ENCODE measurements at regions of chr7 and their contacts with region 1.

Region 1: DNA sequence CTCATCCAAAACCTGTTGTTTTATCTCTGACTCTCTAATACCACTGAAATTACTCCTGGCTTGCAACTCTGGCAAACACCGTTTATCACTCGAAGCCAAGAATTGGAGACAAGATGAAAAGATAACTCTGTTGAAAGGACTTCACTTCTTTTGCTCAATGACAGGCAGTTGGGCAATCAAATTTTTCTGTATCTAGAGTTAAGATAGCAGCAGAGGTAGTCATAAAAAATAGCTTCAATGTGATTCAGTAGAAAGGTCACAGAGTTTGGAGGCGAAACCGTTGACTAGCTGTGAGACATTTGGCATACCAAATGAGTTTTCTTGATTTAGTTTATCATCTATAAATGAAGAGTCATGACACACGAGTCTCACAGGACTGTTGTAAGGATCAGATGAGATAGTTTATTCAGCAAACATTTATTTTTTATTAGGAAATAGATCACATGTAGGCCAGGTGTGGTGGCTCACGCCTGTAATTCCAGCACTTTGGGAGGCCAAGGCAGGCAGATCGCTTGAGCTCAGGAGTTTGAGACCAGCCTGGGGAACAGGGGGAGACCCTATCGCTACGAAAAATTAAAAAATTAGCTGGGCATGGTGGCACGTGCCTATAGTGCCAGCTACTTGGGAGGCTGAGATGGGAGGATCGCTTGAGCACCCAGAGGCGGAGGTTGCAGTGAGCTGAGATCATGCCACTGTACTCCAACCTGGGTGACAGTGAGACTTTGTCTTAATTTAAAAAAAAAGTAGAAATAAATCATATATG is 23.6 kb downstream of the AKR1B1 start:
- DNase-seq: no peak
- ATAC-seq: no peak
- H3K4me3 ChIP-seq: no peak overlapping the region
- H3K27ac ChIP-seq: no peak overlapping the region
- H3K4me1 ChIP-seq: peaks cover 7% of the 10 kb centered on the region
- H3K27me3 ChIP-seq: no peaks in the 10 kb centered on the region
- CTCF ChIP-seq: no peak
- POLR2A ChIP-seq: no peak

Region 2: DNA sequence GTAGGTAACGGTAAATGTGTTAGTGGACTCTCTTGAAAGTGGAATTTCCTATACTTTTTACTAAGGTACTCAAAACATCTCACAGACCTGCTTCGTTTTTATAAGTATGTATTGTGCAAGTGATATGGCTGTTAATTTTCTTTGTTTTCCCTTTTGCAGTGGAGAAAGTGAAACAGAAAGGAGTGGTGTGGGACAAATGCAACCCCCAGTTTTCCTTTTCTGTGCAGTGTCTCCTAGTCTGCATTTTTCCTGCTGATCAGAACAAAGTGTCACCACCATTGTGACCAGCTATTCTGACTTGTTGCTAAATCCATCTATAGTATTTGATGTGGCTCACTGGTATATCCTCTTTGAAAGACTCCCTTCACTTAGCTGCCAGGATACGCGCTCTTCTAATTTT is 772.5 kb before region 1 on chr7:
- intact Hi-C with region 1: no loop called
- DNase-seq: no peak
- ATAC-seq: no peak
- H3K4me3 ChIP-seq: no peak overlapping the region
- H3K27ac ChIP-seq: no peak overlapping the region
- H3K4me1 ChIP-seq: no peaks in the 10 kb centered on the region
- H3K27me3 ChIP-seq: no peaks in the 10 kb centered on the region
- CTCF ChIP-seq: no peak
- POLR2A ChIP-seq: no peak

Region 3: GRCh38 chr7:134480736-134481135 is 45.4 kb after region 1 on chr7:
- intact Hi-C with region 1: no loop called
- DNase-seq: peak in 2 of 4 donors; percentile 12 to 23
- ATAC-seq: peak; percentile 55
- H3K4me3 ChIP-seq: no peak overlapping the region
- H3K27ac ChIP-seq: no peak overlapping the region
- H3K4me1 ChIP-seq: no peaks in the 10 kb centered on the region
- H3K27me3 ChIP-seq: no peaks in the 10 kb centered on the region
- CTCF ChIP-seq: no peak
- POLR2A ChIP-seq: no peak

Region 4: GRCh38 chr7:134605973-134606923 is 170.9 kb after region 1 on chr7:
- intact Hi-C with region 1: loop called (anchors 5 kb)
- DNase-seq: peak; percentile 67 to 77 (median 69)
- ATAC-seq: peak; percentile 88
- H3K4me3 ChIP-seq: no peak overlapping the region
- H3K27ac ChIP-seq: no peak overlapping the region
- H3K4me1 ChIP-seq: no peaks in the 10 kb centered on the region
- H3K27me3 ChIP-seq: no peaks in the 10 kb centered on the region
- CTCF ChIP-seq: peak; percentile 81 to 99 (median 85)
- POLR2A ChIP-seq: no peak